Right cardiac atrium (tissue), 5 donors: ENCODE measurements at regions of chr22 and their contacts with region 1.

Region 1: DNA sequence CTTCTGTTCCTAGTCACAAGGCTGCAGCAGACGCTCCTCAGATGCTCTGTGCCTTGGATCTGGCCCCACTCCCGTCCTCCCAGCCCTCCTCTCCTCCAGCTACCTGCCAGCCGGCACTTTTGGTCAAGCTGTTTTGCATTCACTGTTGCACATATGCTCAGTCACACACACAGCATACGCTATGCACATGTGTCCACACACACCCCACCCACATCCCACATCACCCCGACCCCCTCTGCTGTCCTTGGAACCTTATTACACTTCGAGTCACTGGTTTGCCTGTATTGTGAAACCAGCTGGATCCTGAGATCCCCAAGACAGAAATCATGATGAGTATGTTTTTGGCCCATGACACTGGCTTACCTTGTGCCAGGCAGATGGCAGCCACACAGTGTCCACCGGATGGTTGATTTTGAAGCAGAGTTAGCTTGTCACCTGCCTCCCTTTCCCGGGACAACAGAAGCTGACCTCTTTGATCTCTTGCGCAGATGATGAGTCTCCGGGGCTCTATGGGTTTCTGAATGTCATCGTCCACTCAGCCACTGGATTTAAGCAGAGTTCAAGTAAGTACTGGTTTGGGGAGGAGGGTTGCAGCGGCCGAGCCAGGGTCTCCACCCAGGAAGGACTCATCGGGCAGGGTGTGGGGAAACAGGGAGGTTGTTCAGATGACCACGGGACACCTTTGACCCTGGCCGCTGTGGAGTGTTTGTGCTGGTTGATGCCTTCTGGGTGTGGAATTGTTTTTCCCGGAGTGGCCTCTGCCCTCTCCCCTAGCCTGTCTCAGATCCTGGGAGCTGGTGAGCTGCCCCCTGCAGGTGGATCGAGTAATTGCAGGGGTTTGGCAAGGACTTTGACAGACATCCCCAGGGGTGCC is 109.8 kb downstream of the BCR start:
- DNase-seq: peak; percentile 70 to 79 (median 71)
- ATAC-seq: peak; percentile 38 to 88
- H3K4me3 ChIP-seq: no peak overlapping the region
- H3K27ac ChIP-seq: no peak overlapping the region
- H3K4me1 ChIP-seq: no peaks in the 10 kb centered on the region
- H3K27me3 ChIP-seq: no peaks in the 10 kb centered on the region

Region 2: DNA sequence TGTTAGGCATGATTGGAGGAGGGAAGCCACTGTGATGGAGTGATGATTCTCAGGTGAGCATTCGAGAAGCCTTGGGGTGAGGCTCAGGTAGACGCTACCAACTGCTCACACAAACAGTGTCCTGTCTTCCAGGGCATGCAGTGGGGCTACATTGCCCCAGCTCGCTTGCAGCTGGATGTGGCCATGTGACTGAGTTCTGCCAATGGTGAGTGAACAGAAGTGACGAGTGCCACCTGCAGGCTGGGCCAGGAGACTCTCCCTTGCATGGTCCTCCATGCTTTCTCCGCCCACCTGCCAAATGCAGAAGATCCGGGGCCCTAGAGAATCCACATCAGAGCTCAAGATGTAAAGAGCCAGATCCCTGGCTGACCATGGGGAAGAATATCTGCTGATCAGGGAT is 86.2 kb after region 1 on chr22:
- intact Hi-C with region 1: loop called in 1 of 4 experiments (anchors 10 kb)
- DNase-seq: no peak
- ATAC-seq: peak in 1 of 2 donors; percentile 30
- H3K4me3 ChIP-seq: no peak overlapping the region
- H3K27ac ChIP-seq: no peak overlapping the region
- H3K4me1 ChIP-seq: no peaks in the 10 kb centered on the region
- H3K27me3 ChIP-seq: no peaks in the 10 kb centered on the region

Region 3: DNA sequence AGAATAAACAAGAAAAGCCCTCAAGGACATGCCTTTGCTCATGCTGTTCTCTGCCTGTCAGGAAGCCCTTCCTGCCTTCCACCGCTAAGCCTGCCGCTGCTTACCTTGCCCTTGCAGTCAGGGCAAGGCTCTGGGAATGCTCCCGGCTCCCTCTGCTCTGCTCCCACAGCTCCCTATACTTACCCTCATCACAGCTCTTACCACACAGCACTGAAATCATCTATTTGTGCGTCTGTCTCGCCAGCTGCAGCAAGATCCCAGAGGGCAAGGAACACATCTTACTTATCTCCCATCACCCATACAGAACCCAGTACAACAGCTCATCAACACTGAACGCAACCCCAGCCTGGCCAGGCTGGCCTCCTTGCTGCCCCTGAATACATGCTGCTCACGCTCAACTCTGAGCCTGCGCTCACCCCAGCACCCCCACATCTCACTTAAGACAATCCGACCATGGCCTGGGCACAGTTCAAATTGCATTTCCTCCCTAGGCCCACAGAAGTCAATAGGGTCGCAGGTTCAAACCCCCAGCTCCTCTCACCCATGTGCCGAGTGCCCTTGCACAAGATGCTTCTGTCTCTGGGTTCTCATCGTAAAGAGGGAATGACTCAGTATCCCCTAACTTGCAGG is 128.2 kb after region 1 on chr22:
- intact Hi-C with region 1: no loop called
- DNase-seq: no peak
- ATAC-seq: no peak
- H3K4me3 ChIP-seq: no peak overlapping the region
- H3K27ac ChIP-seq: no peak overlapping the region
- H3K4me1 ChIP-seq: no peaks in the 10 kb centered on the region
- H3K27me3 ChIP-seq: no peaks in the 10 kb centered on the region